ENCODE measurements at regions of chr14 and their contacts with region 1.

Region 1: DNA sequence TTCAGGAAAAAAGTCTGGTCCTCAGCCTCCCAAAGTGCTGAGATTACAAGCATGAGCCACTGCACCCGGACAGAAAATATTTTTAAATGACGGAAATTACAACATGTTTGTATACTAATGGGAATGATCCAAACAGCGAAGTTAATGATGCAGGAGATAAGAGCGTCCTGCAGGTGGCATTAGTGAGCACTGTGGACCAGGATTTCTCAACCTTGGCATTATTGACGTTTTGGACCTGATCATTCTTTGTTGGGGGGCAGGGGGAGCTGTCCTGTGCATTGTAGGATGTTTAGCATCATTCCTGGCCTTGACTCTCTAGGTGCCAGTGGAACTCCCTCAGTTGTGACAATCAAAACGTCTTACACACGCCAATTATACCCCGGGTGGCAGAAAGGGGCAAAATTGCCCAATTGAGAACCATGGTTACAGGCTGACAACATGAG is 34.1 kb downstream of the SCFD1 start:
- DNase-seq: no peak
- H3K4me3 ChIP-seq: no peak overlapping the region
- H3K27ac ChIP-seq: peak overlapping the region in 1 of 8 donors; percentile 5
- H3K4me1 ChIP-seq: peaks cover 0 to 14% (median 0%) of the 10 kb centered on the region in 6 donors
- H3K27me3 ChIP-seq: no peaks in the 10 kb centered on the region
- CTCF ChIP-seq: peak in 10 of 11 experiments; percentile 32 to 66 (median 58)
- POLR2A ChIP-seq: no peak

Region 2: GRCh38 chr14:30507209-30507608 is 149.0 kb before region 1 on chr14:
- intact Hi-C with region 1: no loop called
- DNase-seq: no peak
- H3K4me3 ChIP-seq: no peak overlapping the region
- H3K27ac ChIP-seq: no peak overlapping the region
- H3K4me1 ChIP-seq: no peaks in the 10 kb centered on the region
- H3K27me3 ChIP-seq: peaks cover 0 to 18% (median 0%) of the 10 kb centered on the region in 7 donors
- CTCF ChIP-seq: no peak
- POLR2A ChIP-seq: no peak

Region 3: DNA sequence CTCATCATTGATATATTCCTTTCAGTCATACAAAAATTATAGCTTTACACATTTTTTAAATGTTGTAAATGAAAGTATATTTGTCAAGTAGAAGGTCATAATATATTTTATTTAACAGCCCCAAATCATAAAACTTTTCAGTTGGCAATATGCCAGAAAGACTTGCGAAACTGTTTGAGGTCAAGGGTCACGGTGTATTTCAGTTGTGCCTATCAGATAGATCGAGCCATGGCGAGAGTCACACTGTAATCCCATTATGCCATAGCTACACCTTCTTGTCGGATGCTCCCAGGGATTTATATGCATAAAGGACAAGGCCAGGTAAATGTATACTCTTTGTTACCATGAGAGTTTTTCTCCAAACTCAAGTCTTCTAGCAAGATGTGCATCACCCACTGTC is 123.9 kb before region 1 on chr14:
- intact Hi-C with region 1: no loop called
- DNase-seq: no peak
- H3K4me3 ChIP-seq: no peak overlapping the region
- H3K27ac ChIP-seq: no peak overlapping the region
- H3K4me1 ChIP-seq: no peaks in the 10 kb centered on the region
- H3K27me3 ChIP-seq: peaks cover 0 to 6% (median 0%) of the 10 kb centered on the region in 7 donors
- CTCF ChIP-seq: no peak
- POLR2A ChIP-seq: no peak

Region 4: DNA sequence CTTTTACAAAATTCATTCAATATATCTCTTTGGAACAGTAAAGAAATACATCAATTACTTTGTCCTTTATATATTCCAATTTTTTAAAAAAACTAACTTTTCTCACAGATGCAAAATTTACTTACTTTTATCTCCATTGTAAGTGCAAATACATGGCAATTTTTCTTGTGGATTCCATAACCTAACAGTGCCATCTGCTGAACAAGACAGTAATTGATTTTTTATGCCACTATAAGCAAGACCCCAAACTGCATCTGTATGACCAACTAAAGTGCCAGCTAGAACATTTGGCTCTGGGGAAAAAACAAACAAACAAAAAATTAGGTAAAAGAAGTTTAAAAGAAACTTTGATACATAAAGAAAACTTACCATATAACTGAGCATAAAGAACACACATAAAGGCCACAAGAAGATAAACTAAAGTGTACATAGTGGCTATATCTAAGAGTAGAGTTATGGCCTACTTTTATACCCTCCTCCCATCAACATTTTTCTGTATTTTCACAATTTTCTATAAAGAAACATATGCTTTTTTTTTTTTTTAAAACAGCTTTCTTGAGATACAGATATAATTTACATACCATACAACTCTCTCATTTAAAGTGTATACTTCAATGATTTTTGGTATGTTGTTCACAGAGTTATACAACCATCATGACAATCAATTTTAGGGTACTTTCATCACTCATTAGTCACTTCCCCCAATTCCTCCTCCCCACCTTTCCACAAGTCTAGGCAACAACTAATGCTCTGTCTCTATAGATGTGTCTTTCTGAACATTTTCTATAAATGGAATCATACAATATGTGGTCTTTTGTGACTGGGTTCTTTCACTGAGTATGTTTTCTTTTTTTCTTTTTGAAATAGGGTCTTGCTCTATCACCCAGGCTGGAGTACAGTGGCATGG is 250.8 kb after region 1 on chr14:
- intact Hi-C with region 1: loop called (anchors 5 kb)
- DNase-seq: no peak
- H3K4me3 ChIP-seq: no peak overlapping the region
- H3K27ac ChIP-seq: no peak overlapping the region
- H3K4me1 ChIP-seq: peaks cover 0 to 5% (median 0%) of the 10 kb centered on the region in 6 donors
- H3K27me3 ChIP-seq: no peaks in the 10 kb centered on the region
- CTCF ChIP-seq: peak in 3 of 11 experiments; percentile 9 to 21 (median 11)
- POLR2A ChIP-seq: no peak

Region 5: GRCh38 chr14:31357279-31357678 is 701.1 kb after region 1 on chr14:
- intact Hi-C with region 1: loop called (anchors 10 kb)
- DNase-seq: no peak
- H3K4me3 ChIP-seq: no peak overlapping the region
- H3K27ac ChIP-seq: no peak overlapping the region
- H3K4me1 ChIP-seq: peaks cover 3 to 19% (median 11%) of the 10 kb centered on the region in 6 donors
- H3K27me3 ChIP-seq: no peaks in the 10 kb centered on the region
- CTCF ChIP-seq: no peak
- POLR2A ChIP-seq: no peak